AG04449 (cell line): ENCODE measurements at regions of chr14 and their contacts with region 1.

Region 1: DNA sequence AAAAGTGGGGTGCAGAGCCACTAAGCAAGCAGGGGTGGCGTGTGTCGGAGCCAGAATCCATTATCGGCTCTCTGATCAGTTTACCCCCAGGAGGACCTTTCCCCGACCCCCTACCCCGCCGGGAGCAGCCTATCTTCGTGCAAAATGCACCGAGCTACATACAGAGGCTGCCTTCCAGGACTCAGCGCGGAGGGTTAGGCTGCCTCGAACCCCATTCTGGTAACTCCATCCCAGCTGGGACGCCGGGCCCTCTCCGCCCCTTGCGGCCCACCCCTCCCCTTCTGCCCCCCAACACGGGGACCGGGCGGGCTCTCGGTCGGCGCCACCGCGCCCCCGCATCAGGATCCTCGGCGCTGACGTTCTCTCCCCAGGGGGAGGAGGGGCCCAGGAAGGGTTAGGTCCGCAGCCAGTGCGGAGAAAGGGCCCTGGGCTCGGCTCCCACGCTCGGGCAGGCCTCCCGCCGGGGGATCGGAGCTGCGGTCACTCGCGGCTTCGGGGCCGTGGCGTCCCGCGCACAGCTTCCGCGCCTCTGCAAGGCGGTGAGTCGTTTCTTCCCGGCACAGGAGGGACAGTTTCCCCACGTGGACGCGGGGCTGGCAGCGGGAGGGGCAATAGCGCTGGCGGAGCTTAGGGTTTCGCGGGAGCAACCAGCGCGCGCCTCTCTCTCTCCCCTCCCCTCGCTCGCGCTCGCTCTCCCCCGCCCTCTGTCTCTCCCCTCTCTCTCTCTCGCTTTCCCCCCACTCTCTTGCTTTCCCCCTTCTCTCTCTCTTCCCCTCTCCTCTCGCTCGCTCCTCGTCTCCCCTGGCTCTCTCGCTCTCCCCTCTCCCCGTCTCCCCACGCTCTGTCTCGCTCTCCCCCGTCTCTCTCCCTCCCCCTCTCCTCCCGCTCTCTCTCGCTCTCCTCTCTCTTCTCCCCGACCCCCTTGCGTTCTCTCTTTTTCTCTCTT is 12.5 kb upstream of the MAP3K9 start:
- DNase-seq: no peak
- H3K4me3 ChIP-seq: peak overlapping the region; percentile 70
- CTCF ChIP-seq: no peak

Region 2: GRCh38 chr14:70622111-70622712 is 199.6 kb before region 1 on chr14:
- CTCF ChIA-PET with region 1: interaction called, 13 read pairs
- POLR2A ChIA-PET with region 1: no interaction called
- DNase-seq: no peak
- H3K4me3 ChIP-seq: no peak overlapping the region
- CTCF ChIP-seq: peak; percentile 59

Region 3: GRCh38 chr14:70907176-70907995 is 85.5 kb after region 1 on chr14 and contains the start of gene PCNX1:
- CTCF ChIA-PET with region 1: interaction called, 54 read pairs
- POLR2A ChIA-PET with region 1: no interaction called
- DNase-seq: peak; percentile 36
- H3K4me3 ChIP-seq: peak within 1 kb of the TSS; percentile 88
- CTCF ChIP-seq: peak; percentile 79

Region 4: GRCh38 chr14:70955543-70956480 is 134.0 kb after region 1 on chr14:
- CTCF ChIA-PET with region 1: interaction called, 90 read pairs
- POLR2A ChIA-PET with region 1: no interaction called
- DNase-seq: no peak
- H3K4me3 ChIP-seq: no peak overlapping the region
- CTCF ChIP-seq: peak; percentile 62

Region 5: GRCh38 chr14:70981000-70981952 is 159.4 kb after region 1 on chr14:
- CTCF ChIA-PET with region 1: interaction called, 78 read pairs
- POLR2A ChIA-PET with region 1: no interaction called
- DNase-seq: no peak
- H3K4me3 ChIP-seq: no peak overlapping the region
- CTCF ChIP-seq: no peak

Region 6: DNA sequence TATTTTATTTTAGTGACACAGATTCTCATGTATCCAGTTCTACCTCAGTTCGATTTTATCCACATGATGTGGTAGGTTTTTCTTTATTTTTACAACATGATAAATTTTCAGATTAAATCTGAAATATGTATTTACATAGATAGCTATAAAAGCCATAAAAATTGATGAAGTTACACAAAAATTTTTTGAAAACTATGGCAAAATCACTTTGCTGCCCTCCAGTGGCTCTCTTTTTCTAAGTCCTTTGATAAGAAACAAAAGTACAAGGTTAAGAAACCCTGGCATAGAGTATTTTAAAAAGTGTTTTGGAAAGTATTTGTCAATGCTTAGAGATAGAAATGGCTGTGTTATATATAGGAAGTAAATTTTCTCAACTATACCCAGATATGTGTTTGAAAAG is 189.6 kb after region 1 on chr14:
- CTCF ChIA-PET with region 1: interaction called, 13 read pairs
- POLR2A ChIA-PET with region 1: no interaction called
- DNase-seq: no peak
- H3K4me3 ChIP-seq: no peak overlapping the region
- CTCF ChIP-seq: no peak